Activated CD4-positive, alpha-beta T cell treated with anti-CD3 and anti-CD28 coated beads for 36 hours (primary cell): ENCODE measurements at regions of chr15 and their contacts with region 1.

Region 1: GRCh38 chr15:68304589-68305337 is 27.2 kb downstream of the FEM1B start:
- DNase-seq: no peak
- ATAC-seq: no peak
- H3K4me3 Mint-ChIP-seq: no peak overlapping the region
- H3K27ac Mint-ChIP-seq: no peak overlapping the region
- H3K4me1 Mint-ChIP-seq: peaks cover 21% of the 10 kb centered on the region
- H3K27me3 Mint-ChIP-seq: no peaks in the 10 kb centered on the region

Region 2: DNA sequence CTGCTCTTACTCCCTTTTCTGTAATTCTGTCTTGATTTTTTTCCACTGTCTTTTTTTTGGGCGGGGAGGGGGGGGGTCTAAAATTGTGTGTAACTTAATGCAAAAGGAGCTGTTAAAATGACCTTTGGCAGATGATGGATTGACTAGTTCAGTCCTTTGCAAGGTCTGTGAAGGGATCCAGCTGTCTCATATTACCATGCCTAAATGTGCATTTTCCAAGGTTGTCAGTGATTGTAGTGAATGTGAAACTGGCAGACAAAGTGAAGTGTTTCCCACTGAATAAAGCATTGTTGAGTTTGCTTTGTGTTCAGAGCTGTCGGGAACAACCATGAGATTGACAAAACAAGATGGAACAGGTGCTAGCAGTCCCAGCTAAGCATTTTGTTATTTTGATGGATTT is 589.6 kb before region 1 on chr15:
- CTCF ChIA-PET with region 1: no interaction called
- POLR2A ChIA-PET with region 1: no interaction called
- intact Hi-C with region 1: no loop called
- DNase-seq: no peak
- ATAC-seq: no peak
- H3K4me3 Mint-ChIP-seq: no peak overlapping the region
- H3K27ac Mint-ChIP-seq: no peak overlapping the region
- H3K4me1 Mint-ChIP-seq: no peaks in the 10 kb centered on the region
- H3K27me3 Mint-ChIP-seq: no peaks in the 10 kb centered on the region

Region 3: GRCh38 chr15:68292157-68292781 is 12.5 kb before region 1 on chr15:
- CTCF ChIA-PET with region 1: interaction called, 29 read pairs
- POLR2A ChIA-PET with region 1: no interaction called
- intact Hi-C with region 1: no loop called
- DNase-seq: no peak
- ATAC-seq: peak; percentile 53
- H3K4me3 Mint-ChIP-seq: no peak overlapping the region
- H3K27ac Mint-ChIP-seq: no peak overlapping the region
- H3K4me1 Mint-ChIP-seq: peaks cover 57% of the 10 kb centered on the region
- H3K27me3 Mint-ChIP-seq: no peaks in the 10 kb centered on the region

Region 4: DNA sequence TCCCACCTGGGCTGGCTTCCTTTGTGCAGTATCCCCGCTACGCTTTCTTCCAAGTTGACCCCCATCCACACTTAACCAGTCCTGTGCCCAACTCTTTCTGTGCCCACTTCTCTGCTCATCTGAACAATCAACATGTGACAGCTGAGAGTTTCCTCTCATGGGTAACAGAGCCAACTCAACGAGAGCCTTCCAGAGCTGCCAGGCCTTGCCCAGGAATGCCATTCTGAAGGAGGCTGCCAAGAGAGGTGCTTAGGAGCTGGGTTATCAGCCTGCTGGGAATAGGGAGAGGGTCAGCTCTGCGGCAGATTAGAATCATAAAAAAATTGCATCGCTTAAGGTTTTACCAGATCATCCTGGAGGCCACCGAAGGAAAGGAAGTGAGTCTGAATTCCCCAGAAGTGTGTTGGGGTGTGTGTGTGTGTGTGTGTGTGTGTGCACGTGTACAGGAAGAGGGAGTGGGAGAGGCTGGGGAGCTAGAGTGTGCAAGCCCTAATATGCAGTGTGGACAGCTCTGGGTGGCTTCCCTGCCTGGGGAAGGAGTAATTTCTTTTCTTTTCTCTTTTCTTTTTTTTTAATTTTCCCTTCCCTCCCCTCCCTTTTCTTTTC is 60.5 kb after region 1 on chr15:
- CTCF ChIA-PET with region 1: interaction called, 12 read pairs
- POLR2A ChIA-PET with region 1: no interaction called
- intact Hi-C with region 1: loop called in 1 of 2 experiments (anchors 5 kb)
- DNase-seq: peak; percentile 40
- ATAC-seq: peak; percentile 88
- H3K4me3 Mint-ChIP-seq: peak overlapping the region; percentile 62
- H3K27ac Mint-ChIP-seq: peak overlapping the region; percentile 84
- H3K4me1 Mint-ChIP-seq: peaks cover 10% of the 10 kb centered on the region
- H3K27me3 Mint-ChIP-seq: no peaks in the 10 kb centered on the region

Region 5: GRCh38 chr15:68543165-68544008 is 238.6 kb after region 1 on chr15:
- CTCF ChIA-PET with region 1: interaction called, 3 read pairs
- POLR2A ChIA-PET with region 1: no interaction called
- intact Hi-C with region 1: loop called in 1 of 2 experiments (anchors 1 kb)
- DNase-seq: no peak
- ATAC-seq: no peak
- H3K4me3 Mint-ChIP-seq: no peak overlapping the region
- H3K27ac Mint-ChIP-seq: no peak overlapping the region
- H3K4me1 Mint-ChIP-seq: peaks cover 3% of the 10 kb centered on the region
- H3K27me3 Mint-ChIP-seq: peaks cover 11% of the 10 kb centered on the region

Region 6: GRCh38 chr15:68672781-68673205 is 368.0 kb after region 1 on chr15:
- CTCF ChIA-PET with region 1: interaction called, 4 read pairs
- POLR2A ChIA-PET with region 1: no interaction called
- intact Hi-C with region 1: loop called in 1 of 2 experiments (anchors 1 kb)
- DNase-seq: no peak
- ATAC-seq: no peak
- H3K4me3 Mint-ChIP-seq: no peak overlapping the region
- H3K27ac Mint-ChIP-seq: no peak overlapping the region
- H3K4me1 Mint-ChIP-seq: peaks cover 4% of the 10 kb centered on the region
- H3K27me3 Mint-ChIP-seq: peaks cover 9% of the 10 kb centered on the region

Region 7: GRCh38 chr15:68791431-68792283 is 486.9 kb after region 1 on chr15:
- CTCF ChIA-PET with region 1: no interaction called
- POLR2A ChIA-PET with region 1: no interaction called
- intact Hi-C with region 1: no loop called
- DNase-seq: peak; percentile 66
- ATAC-seq: peak; percentile 65
- H3K4me3 Mint-ChIP-seq: peak overlapping the region; percentile 22
- H3K27ac Mint-ChIP-seq: peak overlapping the region; percentile 72
- H3K4me1 Mint-ChIP-seq: peaks cover 78% of the 10 kb centered on the region
- H3K27me3 Mint-ChIP-seq: no peaks in the 10 kb centered on the region